Naive thymus-derived CD4-positive, alpha-beta T cell (primary cell): ENCODE measurements at regions of chr15 and their contacts with region 1.

Region 1: GRCh38 chr15:96345560-96346399 is 15.3 kb downstream of the NR2F2 start:
- DNase-seq: no peak
- ATAC-seq: peak; percentile 38
- H3K4me3 ChIP-seq: no peak overlapping the region
- H3K4me3 Mint-ChIP-seq: peak overlapping the region in 3 of 10 donors; percentile 5 to 43 (median 25)
- H3K27ac ChIP-seq: no peak overlapping the region
- H3K27ac Mint-ChIP-seq: peak overlapping the region in 1 of 9 donors; percentile 58
- H3K4me1 ChIP-seq: no peaks in the 10 kb centered on the region
- H3K4me1 Mint-ChIP-seq: peaks cover 4 to 27% (median 13%) of the 10 kb centered on the region in 7 donors
- H3K27me3 ChIP-seq: peaks cover 0 to 44% of the 10 kb centered on the region in 2 donors
- H3K27me3 Mint-ChIP-seq: peaks cover 92 to 99% (median 96%) of the 10 kb centered on the region in 5 donors

Region 2: GRCh38 chr15:94670438-94671034 is 1675.2 kb before region 1 on chr15:
- CTCF ChIA-PET with region 1: no interaction called
- POLR2A ChIA-PET with region 1: no interaction called
- intact Hi-C with region 1: loop called in 1 of 2 experiments (anchors 5 kb)
- DNase-seq: peak in 2 of 9 donors; percentile 3 to 5
- ATAC-seq: no peak
- H3K4me3 ChIP-seq: no peak overlapping the region
- H3K4me3 Mint-ChIP-seq: no peak overlapping the region
- H3K27ac ChIP-seq: no peak overlapping the region
- H3K27ac Mint-ChIP-seq: no peak overlapping the region
- H3K4me1 ChIP-seq: no peaks in the 10 kb centered on the region
- H3K4me1 Mint-ChIP-seq: peaks cover 0 to 3% (median 0%) of the 10 kb centered on the region in 7 donors
- H3K27me3 ChIP-seq: no peaks in the 10 kb centered on the region
- H3K27me3 Mint-ChIP-seq: peaks cover 26 to 63% (median 52%) of the 10 kb centered on the region in 5 donors

Region 3: DNA sequence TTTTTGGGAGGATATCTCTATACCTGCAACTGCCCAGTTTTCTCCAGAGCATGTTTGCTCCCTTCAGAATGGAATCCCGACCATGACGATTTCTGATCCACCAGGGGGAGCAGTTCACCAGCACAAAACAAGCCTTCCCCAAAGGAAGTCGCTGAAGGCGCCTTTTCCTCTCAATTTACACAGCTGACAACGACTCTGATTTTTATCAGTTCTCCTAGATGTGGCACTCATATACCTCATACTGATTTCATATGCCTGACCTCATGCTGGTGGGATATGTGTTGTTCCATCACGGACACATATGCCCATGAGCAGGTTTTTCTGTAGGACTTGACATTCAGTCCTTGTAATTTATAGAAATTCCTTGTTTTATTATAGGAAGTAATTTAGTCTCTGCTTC is 1086.3 kb before region 1 on chr15:
- CTCF ChIA-PET with region 1: no interaction called
- POLR2A ChIA-PET with region 1: no interaction called
- intact Hi-C with region 1: loop called in 1 of 2 experiments (anchors 1 kb)
- DNase-seq: peak; percentile 7 to 61 (median 43)
- ATAC-seq: peak; percentile 40
- H3K4me3 ChIP-seq: no peak overlapping the region
- H3K4me3 Mint-ChIP-seq: no peak overlapping the region
- H3K27ac ChIP-seq: no peak overlapping the region
- H3K27ac Mint-ChIP-seq: no peak overlapping the region
- H3K4me1 ChIP-seq: no peaks in the 10 kb centered on the region
- H3K4me1 Mint-ChIP-seq: peaks cover 0 to 13% (median 0%) of the 10 kb centered on the region in 7 donors
- H3K27me3 ChIP-seq: peaks cover 0 to 7% of the 10 kb centered on the region in 2 donors
- H3K27me3 Mint-ChIP-seq: peaks cover 41 to 75% (median 44%) of the 10 kb centered on the region in 5 donors

Region 4: DNA sequence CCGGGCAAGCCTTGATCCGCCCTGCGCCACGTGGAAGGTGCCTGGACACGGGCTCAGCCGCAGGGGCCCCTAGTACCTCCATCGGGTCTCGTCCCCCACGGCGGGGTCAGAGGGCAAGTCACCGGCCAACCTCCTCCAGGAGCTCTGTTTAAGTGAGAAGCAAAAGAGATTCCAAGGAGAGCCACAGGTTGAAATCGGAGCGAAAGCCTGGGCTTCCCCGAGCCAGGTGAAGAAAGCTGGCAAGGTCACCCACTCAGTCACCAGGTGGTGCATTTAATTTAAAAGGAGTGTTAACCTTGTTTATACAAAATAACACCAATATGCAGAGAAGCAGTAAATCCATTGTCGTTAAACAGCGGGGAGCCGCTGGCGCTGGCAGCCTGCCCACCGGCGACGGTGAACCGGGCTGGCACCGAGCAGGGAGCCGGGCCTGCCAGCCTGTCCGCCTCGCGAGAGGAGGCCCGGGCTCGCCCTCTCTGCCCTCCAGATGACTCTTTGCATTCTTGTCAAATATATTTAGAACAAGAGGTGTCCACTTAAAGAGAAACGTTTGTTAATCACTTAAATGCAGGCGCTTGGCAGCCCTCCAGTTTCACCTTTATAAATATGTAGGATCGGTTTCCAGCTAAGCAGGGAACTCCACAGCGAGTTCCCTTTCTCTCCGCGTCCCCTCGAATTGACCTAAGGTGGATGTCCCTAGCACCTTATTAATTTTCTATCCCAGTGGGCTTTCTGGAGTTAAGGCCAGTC is 292.6 kb before region 1 on chr15:
- CTCF ChIA-PET with region 1: no interaction called
- POLR2A ChIA-PET with region 1: no interaction called
- intact Hi-C with region 1: loop called in 1 of 2 experiments (anchors 10 kb)
- DNase-seq: no peak
- ATAC-seq: no peak
- H3K4me3 ChIP-seq: no peak overlapping the region
- H3K4me3 Mint-ChIP-seq: peak overlapping the region in 9 of 10 donors; percentile 7 to 75 (median 59)
- H3K27ac ChIP-seq: no peak overlapping the region
- H3K27ac Mint-ChIP-seq: no peak overlapping the region
- H3K4me1 ChIP-seq: no peaks in the 10 kb centered on the region
- H3K4me1 Mint-ChIP-seq: peaks cover 0 to 9% (median 4%) of the 10 kb centered on the region in 7 donors
- H3K27me3 ChIP-seq: peaks cover 0 to 5% of the 10 kb centered on the region in 2 donors
- H3K27me3 Mint-ChIP-seq: peaks cover 55 to 76% (median 68%) of the 10 kb centered on the region in 5 donors

Region 5: GRCh38 chr15:96416934-96417759 is 71.4 kb after region 1 on chr15:
- CTCF ChIA-PET with region 1: no interaction called
- POLR2A ChIA-PET with region 1: no interaction called
- intact Hi-C with region 1: loop called in 1 of 2 experiments (anchors 5 kb)
- DNase-seq: no peak
- ATAC-seq: no peak
- H3K4me3 ChIP-seq: no peak overlapping the region
- H3K4me3 Mint-ChIP-seq: peak overlapping the region in 1 of 10 donors; percentile 28
- H3K27ac ChIP-seq: no peak overlapping the region
- H3K27ac Mint-ChIP-seq: peak overlapping the region in 1 of 9 donors; percentile 10
- H3K4me1 ChIP-seq: no peaks in the 10 kb centered on the region
- H3K4me1 Mint-ChIP-seq: peaks cover 0 to 6% (median 4%) of the 10 kb centered on the region in 7 donors
- H3K27me3 ChIP-seq: no peaks in the 10 kb centered on the region
- H3K27me3 Mint-ChIP-seq: peaks cover 69 to 90% (median 75%) of the 10 kb centered on the region in 5 donors